Activated CD4-positive, alpha-beta T cell treated with anti-CD3 and anti-CD28 coated beads for 36 hours (primary cell): ENCODE measurements at regions of chr4 and their contacts with region 1.

Region 1: GRCh38 chr4:15457406-15458201 is 12.1 kb upstream of the CC2D2A start:
- DNase-seq: no peak
- ATAC-seq: peak; percentile 69
- H3K4me3 Mint-ChIP-seq: no peak overlapping the region
- H3K27ac Mint-ChIP-seq: no peak overlapping the region
- H3K4me1 Mint-ChIP-seq: peaks cover 3% of the 10 kb centered on the region
- H3K27me3 Mint-ChIP-seq: no peaks in the 10 kb centered on the region

Region 2: DNA sequence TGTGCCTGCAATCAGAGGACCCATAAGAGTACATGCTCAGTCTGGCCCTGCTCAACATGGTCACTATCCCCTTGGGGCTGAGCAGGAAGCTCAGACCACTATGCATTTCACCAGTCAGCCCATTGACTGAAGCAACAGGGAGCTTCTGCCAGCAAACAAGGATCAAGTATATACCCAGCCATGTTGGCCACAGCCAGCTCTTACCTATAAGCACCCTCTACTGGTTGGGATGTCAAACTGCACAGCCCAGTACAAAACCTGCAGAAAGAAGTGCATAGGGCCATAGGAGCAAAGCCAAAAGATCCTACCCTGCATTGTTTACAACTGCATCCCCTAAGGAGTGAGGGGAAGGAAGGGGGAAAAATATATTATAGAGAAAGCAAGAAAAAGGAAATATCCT is 669.7 kb before region 1 on chr4:
- CTCF ChIA-PET with region 1: no interaction called
- POLR2A ChIA-PET with region 1: no interaction called
- intact Hi-C with region 1: no loop called
- DNase-seq: peak; percentile 42
- ATAC-seq: peak; percentile 27
- H3K4me3 Mint-ChIP-seq: no peak overlapping the region
- H3K27ac Mint-ChIP-seq: no peak overlapping the region
- H3K4me1 Mint-ChIP-seq: peaks cover 35% of the 10 kb centered on the region
- H3K27me3 Mint-ChIP-seq: peaks cover 18% of the 10 kb centered on the region

Region 3: GRCh38 chr4:14984448-14984847 is 473.2 kb before region 1 on chr4:
- CTCF ChIA-PET with region 1: no interaction called
- POLR2A ChIA-PET with region 1: no interaction called
- intact Hi-C with region 1: no loop called
- DNase-seq: no peak
- ATAC-seq: no peak
- H3K4me3 Mint-ChIP-seq: no peak overlapping the region
- H3K27ac Mint-ChIP-seq: no peak overlapping the region
- H3K4me1 Mint-ChIP-seq: no peaks in the 10 kb centered on the region
- H3K27me3 Mint-ChIP-seq: peaks cover 3% of the 10 kb centered on the region

Region 4: DNA sequence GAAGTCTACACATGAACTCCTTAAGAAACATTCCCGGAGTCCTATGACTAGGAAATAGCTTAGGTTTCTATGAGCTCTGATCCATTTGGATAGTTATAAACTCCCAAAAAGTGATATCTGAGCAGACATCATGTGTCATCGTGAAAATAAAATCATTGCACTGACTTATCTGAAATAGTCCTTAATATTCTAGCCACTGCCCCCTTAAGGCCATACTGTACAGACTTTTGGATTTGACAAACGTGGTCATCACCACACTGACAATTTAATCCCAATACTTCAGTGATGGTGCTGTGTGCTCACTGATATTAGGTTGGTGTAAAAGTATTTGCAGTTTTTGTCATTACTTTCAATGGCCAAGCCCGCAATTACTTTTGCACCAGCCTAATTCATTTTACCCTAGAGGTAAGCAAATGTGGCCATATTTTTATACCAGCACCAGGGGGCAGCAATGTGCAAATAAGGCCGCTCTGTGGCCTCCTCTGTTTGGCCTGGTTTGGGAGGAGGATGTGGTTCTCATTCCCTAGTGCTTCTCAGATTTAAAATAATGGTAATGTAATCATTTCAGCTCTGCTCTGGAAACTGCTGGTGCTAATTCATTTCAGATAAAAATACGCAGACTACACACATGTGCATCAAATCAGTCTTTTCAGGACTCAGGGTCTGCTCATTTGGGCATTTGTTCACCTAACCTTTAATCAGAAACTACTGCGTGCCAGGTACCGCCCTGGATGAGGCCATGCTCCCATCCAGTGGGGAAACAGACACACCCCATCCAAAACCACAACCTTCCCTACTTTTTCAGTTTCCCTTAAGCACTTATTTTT is 226.1 kb before region 1 on chr4:
- CTCF ChIA-PET with region 1: interaction called, 27 read pairs
- POLR2A ChIA-PET with region 1: no interaction called
- intact Hi-C with region 1: loop called (anchors 1 kb)
- DNase-seq: peak; percentile 85
- ATAC-seq: peak; percentile 65
- H3K4me3 Mint-ChIP-seq: no peak overlapping the region
- H3K27ac Mint-ChIP-seq: no peak overlapping the region
- H3K4me1 Mint-ChIP-seq: peaks cover 31% of the 10 kb centered on the region
- H3K27me3 Mint-ChIP-seq: no peaks in the 10 kb centered on the region

Region 5: GRCh38 chr4:15396157-15396800 is 61.3 kb before region 1 on chr4:
- CTCF ChIA-PET with region 1: interaction called, 19 read pairs
- POLR2A ChIA-PET with region 1: no interaction called
- intact Hi-C with region 1: loop called (anchors 1 to 5 kb)
- DNase-seq: peak; percentile 79
- ATAC-seq: peak; percentile 84
- H3K4me3 Mint-ChIP-seq: no peak overlapping the region
- H3K27ac Mint-ChIP-seq: no peak overlapping the region
- H3K4me1 Mint-ChIP-seq: peaks cover 26% of the 10 kb centered on the region
- H3K27me3 Mint-ChIP-seq: no peaks in the 10 kb centered on the region

Region 6: DNA sequence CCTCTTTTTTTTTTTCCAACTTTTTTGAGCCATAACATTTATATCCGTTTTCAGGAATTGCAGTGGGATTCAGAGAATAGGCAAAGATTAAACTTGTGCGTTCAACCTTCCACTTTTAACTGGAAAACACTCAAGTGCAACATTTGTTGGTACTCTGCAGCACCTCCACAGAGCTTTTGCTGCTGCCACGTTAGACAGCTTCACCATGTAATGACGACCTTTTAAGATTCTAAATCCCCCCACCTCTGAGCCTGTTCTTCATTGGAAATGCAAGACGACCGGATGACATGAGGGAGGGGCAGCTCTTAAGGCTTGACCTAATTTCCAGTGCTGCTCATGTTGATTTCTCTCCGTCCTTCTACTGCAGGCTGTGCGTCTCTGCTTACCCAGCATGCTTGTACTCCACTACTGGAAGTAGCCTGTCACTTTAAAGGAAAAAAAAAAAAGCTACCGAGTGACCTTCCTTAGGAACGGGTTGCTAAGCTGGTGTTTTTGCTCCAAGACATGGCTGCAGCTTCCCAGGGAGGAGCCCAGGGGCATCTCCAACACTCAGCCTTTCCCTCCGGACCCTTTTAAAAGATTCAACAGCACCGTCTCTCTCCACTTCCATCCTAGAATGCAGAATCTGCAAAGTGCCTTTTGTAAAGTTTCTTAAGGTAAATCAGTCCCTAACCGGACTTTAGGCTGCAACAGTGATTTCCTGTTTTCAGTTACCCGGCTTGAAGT is 12.0 kb after region 1 on chr4 and contains the start of gene CC2D2A:
- CTCF ChIA-PET with region 1: interaction called, 33 read pairs
- POLR2A ChIA-PET with region 1: no interaction called
- intact Hi-C with region 1: no loop called
- DNase-seq: no peak
- ATAC-seq: no peak
- H3K4me3 Mint-ChIP-seq: no peak within 1 kb of the TSS
- H3K27ac Mint-ChIP-seq: no peak within 1 kb of the TSS
- H3K4me1 Mint-ChIP-seq: peaks cover 10% of the 10 kb centered on the region
- H3K27me3 Mint-ChIP-seq: no peaks in the 10 kb centered on the region
- total RNA-seq, gene CC2D2A: not detected